Ovary (tissue), 10 donors: ENCODE measurements at regions of chrX and their contacts with region 1.

Region 1: GRCh38 chrX:7996414-7996813 is 69.2 kb upstream of the PNPLA4 start:
- DNase-seq: peak in 1 of 5 donors; percentile 20
- H3K4me3 ChIP-seq: no peak overlapping the region
- H3K27ac ChIP-seq: no peak overlapping the region
- H3K4me1 ChIP-seq: no peaks in the 10 kb centered on the region
- H3K27me3 ChIP-seq: no peaks in the 10 kb centered on the region
- CTCF ChIP-seq: peak; percentile 13 to 50 (median 13)
- EP300 ChIP-seq: no peak
- POLR2A ChIP-seq: no peak

Region 2: DNA sequence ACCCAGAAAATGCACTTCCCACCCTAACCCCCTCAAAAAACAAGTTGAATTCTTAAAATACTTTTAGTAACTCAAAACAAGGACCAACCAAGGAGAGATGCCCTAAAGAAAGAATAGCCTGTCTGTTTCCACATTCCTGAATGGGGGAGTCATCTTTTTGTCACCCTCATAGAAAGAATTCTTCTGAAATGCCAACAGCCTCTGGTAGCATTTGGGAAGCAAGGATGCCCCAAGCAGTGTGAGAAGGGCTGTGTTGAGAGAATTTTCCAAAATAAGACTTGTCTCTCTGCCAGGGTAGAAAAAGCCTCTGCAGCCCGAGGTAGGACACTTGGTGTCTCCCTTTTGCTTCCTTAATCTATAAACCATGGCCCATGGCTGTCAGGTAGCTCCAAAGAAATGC is 1288.4 kb before region 1 on chrX:
- intact Hi-C with region 1: no loop called
- DNase-seq: no peak
- H3K4me3 ChIP-seq: no peak overlapping the region
- H3K27ac ChIP-seq: no peak overlapping the region
- H3K4me1 ChIP-seq: no peaks in the 10 kb centered on the region
- H3K27me3 ChIP-seq: no peaks in the 10 kb centered on the region
- CTCF ChIP-seq: no peak
- EP300 ChIP-seq: no peak
- POLR2A ChIP-seq: no peak

Region 3: GRCh38 chrX:7706032-7706431 is 290.4 kb before region 1 on chrX:
- intact Hi-C with region 1: no loop called
- DNase-seq: no peak
- H3K4me3 ChIP-seq: no peak overlapping the region
- H3K27ac ChIP-seq: no peak overlapping the region
- H3K4me1 ChIP-seq: no peaks in the 10 kb centered on the region
- H3K27me3 ChIP-seq: no peaks in the 10 kb centered on the region
- CTCF ChIP-seq: no peak
- EP300 ChIP-seq: no peak
- POLR2A ChIP-seq: no peak

Region 4: GRCh38 chrX:8738588-8739189 is 742.3 kb after region 1 on chrX:
- intact Hi-C with region 1: loop called in 2 of 4 experiments (anchors 10 kb)
- DNase-seq: peak in 4 of 5 donors; percentile 31 to 50 (median 41)
- H3K4me3 ChIP-seq: no peak overlapping the region
- H3K27ac ChIP-seq: no peak overlapping the region
- H3K4me1 ChIP-seq: no peaks in the 10 kb centered on the region
- H3K27me3 ChIP-seq: no peaks in the 10 kb centered on the region
- CTCF ChIP-seq: peak in 1 of 3 donors; percentile 26
- EP300 ChIP-seq: no peak
- POLR2A ChIP-seq: no peak

Region 5: GRCh38 chrX:9227276-9227675 is 1230.9 kb after region 1 on chrX:
- intact Hi-C with region 1: loop called in 1 of 4 experiments (anchors 10 kb)
- DNase-seq: no peak
- H3K4me3 ChIP-seq: no peak overlapping the region
- H3K27ac ChIP-seq: no peak overlapping the region
- H3K4me1 ChIP-seq: no peaks in the 10 kb centered on the region
- H3K27me3 ChIP-seq: no peaks in the 10 kb centered on the region
- CTCF ChIP-seq: no peak
- EP300 ChIP-seq: no peak
- POLR2A ChIP-seq: no peak